SK-N-SH (cell line): ENCODE measurements at regions of chr5 and their contacts with region 1.

Region 1: DNA sequence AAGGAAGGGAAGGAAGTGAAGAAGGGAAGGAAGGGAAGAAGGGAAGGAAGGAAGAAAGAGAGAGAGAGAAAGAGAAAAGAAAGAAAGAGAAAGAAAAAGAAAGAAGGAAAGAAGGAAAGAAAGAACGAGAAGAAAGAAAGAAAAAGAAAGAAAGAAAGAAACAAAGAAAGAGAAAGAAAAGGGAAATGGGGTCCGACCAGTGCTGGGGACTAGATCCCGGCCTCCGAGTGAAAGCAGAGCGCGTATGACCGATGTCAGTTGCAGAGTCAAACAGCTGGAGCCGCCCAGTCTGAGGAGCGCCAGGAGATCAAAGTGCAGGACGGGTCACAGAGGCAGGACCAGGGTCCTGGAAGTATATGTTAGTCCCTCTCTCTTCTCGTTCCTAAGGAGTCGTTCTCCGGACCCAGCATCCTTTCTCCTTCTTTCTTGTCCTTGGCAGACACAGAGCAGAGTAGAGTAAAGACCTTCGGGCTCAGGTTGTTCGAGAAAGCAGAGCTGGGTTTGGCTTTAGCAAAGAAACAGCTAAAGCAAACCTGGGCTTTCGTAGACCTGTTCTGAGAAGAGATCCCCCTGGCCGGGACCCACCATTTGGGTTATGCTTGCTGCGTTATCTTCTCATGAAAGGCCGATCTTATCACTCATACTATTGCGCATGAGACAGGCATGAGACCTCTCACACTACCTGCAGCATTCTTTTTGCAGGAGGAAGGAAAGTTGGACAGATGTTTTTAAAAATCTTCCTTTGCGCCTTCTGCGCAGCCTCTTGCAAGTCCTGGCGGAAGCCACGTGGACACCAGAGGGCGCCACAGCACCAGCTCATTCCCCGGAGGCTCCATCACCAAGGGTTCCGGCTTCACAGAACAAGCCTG is 305.2 kb upstream of the MSX2 start:
- DNase-seq: peak; percentile 77
- H3K4me3 ChIP-seq: peak overlapping the region; percentile 32 to 54
- H3K27ac ChIP-seq: no peak overlapping the region; a peak in 2 of 4 replicates
- H3K4me1 ChIP-seq: peaks cover 0 to 21% of the 10 kb centered on the region in 2 experiments; a peak in 2 of 4 replicates
- H3K27me3 ChIP-seq: no peaks in the 10 kb centered on the region
- CTCF ChIP-seq: peak; percentile 95
- EP300 ChIP-seq: no peak
- RAD21 ChIP-seq: peak; percentile 99

Region 2: GRCh38 chr5:174195517-174195916 is 223.6 kb before region 1 on chr5:
- CTCF ChIA-PET with region 1: no interaction called
- POLR2A ChIA-PET with region 1: no interaction called
- DNase-seq: peak; percentile 58
- H3K4me3 ChIP-seq: no peak overlapping the region
- H3K27ac ChIP-seq: peak overlapping the region in 1 of 2 experiments; percentile 73; a peak in 2 of 4 replicates
- H3K4me1 ChIP-seq: peaks cover 0 to 48% of the 10 kb centered on the region in 2 experiments; a peak in 2 of 4 replicates
- H3K27me3 ChIP-seq: no peaks in the 10 kb centered on the region
- CTCF ChIP-seq: no peak
- EP300 ChIP-seq: no peak
- RAD21 ChIP-seq: no peak

Region 3: GRCh38 chr5:174259696-174260420 is 159.3 kb before region 1 on chr5:
- CTCF ChIA-PET with region 1: no interaction called
- POLR2A ChIA-PET with region 1: no interaction called
- DNase-seq: no peak
- H3K4me3 ChIP-seq: no peak overlapping the region
- H3K27ac ChIP-seq: no peak overlapping the region
- H3K4me1 ChIP-seq: no peaks in the 10 kb centered on the region; a peak in 1 of 4 replicates
- H3K27me3 ChIP-seq: no peaks in the 10 kb centered on the region
- CTCF ChIP-seq: no peak
- EP300 ChIP-seq: no peak
- RAD21 ChIP-seq: no peak

Region 4: DNA sequence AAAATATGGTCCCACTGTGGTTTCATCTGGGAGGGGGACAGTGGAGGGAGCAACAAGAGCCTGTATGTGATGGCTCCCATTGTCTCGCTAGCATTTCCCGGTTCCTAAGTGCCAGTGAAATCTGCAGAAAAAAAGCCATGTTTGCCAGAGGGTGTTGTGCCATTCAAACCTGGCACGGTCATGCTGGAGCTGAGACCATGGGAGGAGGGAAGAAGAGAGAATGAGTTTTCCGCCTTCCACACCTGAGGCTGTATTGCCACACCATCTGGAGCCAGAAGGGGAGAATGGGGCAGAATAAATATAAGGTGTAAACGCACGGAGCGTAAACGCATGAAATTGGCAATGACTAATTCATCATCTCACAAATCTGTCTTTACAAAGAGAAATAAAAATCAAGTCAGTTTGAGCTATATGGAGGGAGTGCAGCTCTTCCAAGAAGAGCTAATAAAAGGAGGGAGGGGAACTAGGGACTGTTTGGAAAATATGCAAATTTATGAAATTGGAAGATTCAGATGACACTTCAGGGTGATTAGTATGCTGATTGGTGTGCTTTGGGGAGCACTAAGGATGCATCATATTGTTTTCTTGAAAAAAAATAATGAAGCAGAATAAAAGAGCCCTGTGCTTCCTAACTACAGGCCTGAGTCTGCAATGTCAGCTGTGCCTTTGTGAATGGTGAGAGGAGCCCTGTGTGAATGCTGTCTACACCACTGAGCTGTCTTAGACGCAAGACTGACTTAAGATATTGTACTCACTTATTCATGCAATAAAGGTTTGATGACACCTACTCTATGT is 135.8 kb before region 1 on chr5:
- CTCF ChIA-PET with region 1: no interaction called
- POLR2A ChIA-PET with region 1: no interaction called
- DNase-seq: no peak
- H3K4me3 ChIP-seq: no peak overlapping the region
- H3K27ac ChIP-seq: no peak overlapping the region
- H3K4me1 ChIP-seq: no peaks in the 10 kb centered on the region; a peak in 1 of 4 replicates
- H3K27me3 ChIP-seq: no peaks in the 10 kb centered on the region
- CTCF ChIP-seq: no peak
- EP300 ChIP-seq: no peak
- RAD21 ChIP-seq: no peak

Region 5: GRCh38 chr5:174317259-174317894 is 101.8 kb before region 1 on chr5:
- CTCF ChIA-PET with region 1: interaction called, 21 read pairs
- POLR2A ChIA-PET with region 1: no interaction called
- DNase-seq: peak; percentile 84
- H3K4me3 ChIP-seq: peak overlapping the region in 1 of 2 experiments; percentile 33; a peak in 1 of 4 replicates
- H3K27ac ChIP-seq: no peak overlapping the region
- H3K4me1 ChIP-seq: peaks cover 0 to 12% of the 10 kb centered on the region in 2 experiments; a peak in 1 of 4 replicates
- H3K27me3 ChIP-seq: no peaks in the 10 kb centered on the region; the same call in 1 of the 2 replicates
- CTCF ChIP-seq: peak; percentile 85
- EP300 ChIP-seq: 0 out of 4 replicates have a peak, but pooled peaks of 1 of the 2 experiments have one; percentile 7
- RAD21 ChIP-seq: peak; percentile 99

Region 6: GRCh38 chr5:174384509-174384947 is 34.6 kb before region 1 on chr5:
- CTCF ChIA-PET with region 1: interaction called, 12 read pairs
- POLR2A ChIA-PET with region 1: no interaction called
- DNase-seq: peak; percentile 79
- H3K4me3 ChIP-seq: peak overlapping the region in 1 of 2 experiments; percentile 39; a peak in 1 of 4 replicates
- H3K27ac ChIP-seq: peak overlapping the region; percentile 59 to 91
- H3K4me1 ChIP-seq: peaks cover 31 to 39% of the 10 kb centered on the region in 2 experiments
- H3K27me3 ChIP-seq: no peaks in the 10 kb centered on the region
- CTCF ChIP-seq: no peak
- EP300 ChIP-seq: peak; percentile 85 to 96
- RAD21 ChIP-seq: peak; percentile 20; the same call in 1 of the 2 replicates

Region 7: DNA sequence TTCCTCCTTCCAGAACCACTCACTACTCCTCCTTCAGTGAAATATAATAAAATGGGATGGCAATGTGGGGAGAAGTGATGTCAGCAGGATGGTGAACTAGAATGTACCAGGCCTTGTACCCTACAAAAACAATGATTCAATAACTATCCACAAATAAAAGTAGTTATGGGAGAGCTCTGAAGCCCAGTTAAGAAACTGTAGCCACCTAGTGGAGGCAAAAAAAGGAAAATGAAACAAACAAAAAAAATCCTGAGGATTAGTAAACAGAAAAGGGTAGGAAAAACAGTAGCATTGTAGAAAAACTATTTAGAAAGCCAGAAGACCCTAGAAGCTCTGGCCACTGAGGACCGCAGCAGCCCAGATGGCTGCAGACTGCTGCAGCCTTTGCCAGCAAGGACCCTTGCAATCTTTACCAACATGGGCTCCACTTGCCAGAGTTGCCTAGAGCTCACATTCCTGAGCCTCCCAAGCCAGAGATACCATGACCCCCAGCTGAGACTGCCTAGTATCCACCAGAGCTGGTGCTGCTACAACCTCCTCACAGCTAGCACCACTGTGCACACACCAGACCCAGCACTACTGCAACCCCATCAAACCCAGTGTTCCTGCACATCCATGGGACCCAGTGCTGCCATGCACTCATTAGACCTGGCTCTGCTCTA is 45.5 kb after region 1 on chr5:
- CTCF ChIA-PET with region 1: interaction called, 10 read pairs
- POLR2A ChIA-PET with region 1: no interaction called
- DNase-seq: no peak
- H3K4me3 ChIP-seq: no peak overlapping the region
- H3K27ac ChIP-seq: no peak overlapping the region
- H3K4me1 ChIP-seq: no peaks in the 10 kb centered on the region
- H3K27me3 ChIP-seq: no peaks in the 10 kb centered on the region
- CTCF ChIP-seq: peak; percentile 41
- EP300 ChIP-seq: no peak
- RAD21 ChIP-seq: no peak

Region 8: DNA sequence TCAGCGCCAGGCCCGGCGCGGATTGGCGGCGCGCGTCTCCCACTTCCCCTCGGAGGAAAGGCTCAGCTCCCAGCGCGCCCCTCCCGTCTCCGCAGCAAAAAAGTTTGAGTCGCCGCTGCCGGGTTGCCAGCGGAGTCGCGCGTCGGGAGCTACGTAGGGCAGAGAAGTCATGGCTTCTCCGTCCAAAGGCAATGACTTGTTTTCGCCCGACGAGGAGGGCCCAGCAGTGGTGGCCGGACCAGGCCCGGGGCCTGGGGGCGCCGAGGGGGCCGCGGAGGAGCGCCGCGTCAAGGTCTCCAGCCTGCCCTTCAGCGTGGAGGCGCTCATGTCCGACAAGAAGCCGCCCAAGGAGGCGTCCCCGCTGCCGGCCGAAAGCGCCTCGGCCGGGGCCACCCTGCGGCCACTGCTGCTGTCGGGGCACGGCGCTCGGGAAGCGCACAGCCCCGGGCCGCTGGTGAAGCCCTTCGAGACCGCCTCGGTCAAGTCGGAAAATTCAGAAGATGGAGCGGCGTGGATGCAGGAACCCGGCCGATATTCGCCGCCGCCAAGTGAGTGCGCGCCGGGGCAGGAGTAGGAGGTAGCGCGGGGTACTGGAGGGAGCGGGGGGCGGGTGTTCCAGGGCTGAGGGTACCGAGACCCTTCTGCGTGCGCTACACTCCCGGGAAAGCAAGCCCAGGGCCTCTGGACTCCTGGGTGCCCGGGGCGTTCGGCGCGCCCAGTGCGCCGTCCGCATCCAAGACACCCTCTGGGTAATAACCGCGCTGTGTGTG is 305.5 kb after region 1 on chr5 and contains the start of gene MSX2:
- CTCF ChIA-PET with region 1: interaction called, 38 read pairs
- POLR2A ChIA-PET with region 1: no interaction called
- DNase-seq: peak; percentile 97
- H3K4me3 ChIP-seq: peak within 1 kb of the TSS; percentile 78 to 88
- H3K27ac ChIP-seq: peak within 1 kb of the TSS; percentile 35 to 58; a peak in 3 of 4 replicates
- H3K4me1 ChIP-seq: peaks cover 0 to 23% of the 10 kb centered on the region in 2 experiments; a peak in 2 of 4 replicates
- H3K27me3 ChIP-seq: peaks cover 32% of the 10 kb centered on the region
- CTCF ChIP-seq: no peak
- EP300 ChIP-seq: peak in 1 of 2 experiments; percentile 10; a peak in 1 of 4 replicates
- RAD21 ChIP-seq: 0 out of 2 replicates have a peak, but pooled peaks have one; percentile 8
- polyA plus RNA-seq, gene MSX2: 5.1 and 5.8 TPM in 2 replicates

Region 9: GRCh38 chr5:174751154-174752000 is 332.2 kb after region 1 on chr5:
- CTCF ChIA-PET with region 1: interaction called, 25 read pairs
- POLR2A ChIA-PET with region 1: no interaction called
- DNase-seq: peak; percentile 87
- H3K4me3 ChIP-seq: peak overlapping the region; percentile 53 to 71
- H3K27ac ChIP-seq: peak overlapping the region in 1 of 2 experiments; percentile 64; a peak in 2 of 4 replicates
- H3K4me1 ChIP-seq: no peaks in the 10 kb centered on the region; a peak in 1 of 4 replicates
- H3K27me3 ChIP-seq: peaks cover 5% of the 10 kb centered on the region; the same call in 1 of the 2 replicates
- CTCF ChIP-seq: no peak
- EP300 ChIP-seq: no peak
- RAD21 ChIP-seq: no peak

Region 10: GRCh38 chr5:175025077-175025476 is 605.9 kb after region 1 on chr5:
- CTCF ChIA-PET with region 1: no interaction called
- POLR2A ChIA-PET with region 1: no interaction called
- DNase-seq: no peak
- H3K4me3 ChIP-seq: no peak overlapping the region
- H3K27ac ChIP-seq: peak overlapping the region in 1 of 2 experiments; percentile 47; a peak in 1 of 4 replicates
- H3K4me1 ChIP-seq: no peaks in the 10 kb centered on the region; a peak in 1 of 4 replicates
- H3K27me3 ChIP-seq: no peaks in the 10 kb centered on the region
- CTCF ChIP-seq: no peak
- EP300 ChIP-seq: no peak
- RAD21 ChIP-seq: no peak